AG04449 (cell line): ENCODE measurements at regions of chr14 and their contacts with region 1.

Region 1: DNA sequence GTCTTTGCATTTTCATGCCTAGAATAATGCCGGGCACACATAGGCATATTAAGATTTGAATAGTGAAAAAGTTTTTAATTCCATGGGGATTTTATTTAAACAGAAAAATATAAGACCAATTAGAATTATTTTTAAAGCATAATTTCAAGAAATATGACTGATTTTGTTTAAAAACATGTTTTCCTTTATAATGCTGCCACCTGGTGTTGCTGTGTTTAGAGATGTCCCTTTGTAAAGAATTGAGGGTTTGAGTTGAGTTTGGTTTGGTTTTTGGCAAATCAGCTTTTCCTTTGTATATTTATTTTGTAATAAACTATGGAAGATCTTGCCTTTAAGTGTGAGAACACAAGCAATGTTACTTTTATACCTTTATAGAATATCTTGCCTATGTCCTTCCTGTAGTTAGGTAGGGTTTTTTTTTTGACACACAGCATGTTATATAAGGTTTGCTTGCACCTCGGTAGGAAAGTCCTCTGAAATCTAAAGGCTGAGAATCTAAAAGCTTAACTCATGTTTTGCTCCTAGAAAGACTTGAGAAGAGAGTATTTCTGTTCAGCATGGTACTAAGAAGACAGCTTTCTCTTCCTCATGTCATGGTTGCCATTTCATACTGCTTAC is 31.4 kb upstream of the SNAPC1 start:
- DNase-seq: no peak
- H3K4me3 ChIP-seq: no peak overlapping the region
- CTCF ChIP-seq: no peak

Region 2: GRCh38 chr14:61461808-61462275 is 269.0 kb before region 1 on chr14:
- CTCF ChIA-PET with region 1: interaction called, 20 read pairs
- POLR2A ChIA-PET with region 1: no interaction called
- DNase-seq: no peak
- H3K4me3 ChIP-seq: no peak overlapping the region
- CTCF ChIP-seq: peak; percentile 30